ENCODE measurements at regions of chr9 and their contacts with region 1.

Region 1: DNA sequence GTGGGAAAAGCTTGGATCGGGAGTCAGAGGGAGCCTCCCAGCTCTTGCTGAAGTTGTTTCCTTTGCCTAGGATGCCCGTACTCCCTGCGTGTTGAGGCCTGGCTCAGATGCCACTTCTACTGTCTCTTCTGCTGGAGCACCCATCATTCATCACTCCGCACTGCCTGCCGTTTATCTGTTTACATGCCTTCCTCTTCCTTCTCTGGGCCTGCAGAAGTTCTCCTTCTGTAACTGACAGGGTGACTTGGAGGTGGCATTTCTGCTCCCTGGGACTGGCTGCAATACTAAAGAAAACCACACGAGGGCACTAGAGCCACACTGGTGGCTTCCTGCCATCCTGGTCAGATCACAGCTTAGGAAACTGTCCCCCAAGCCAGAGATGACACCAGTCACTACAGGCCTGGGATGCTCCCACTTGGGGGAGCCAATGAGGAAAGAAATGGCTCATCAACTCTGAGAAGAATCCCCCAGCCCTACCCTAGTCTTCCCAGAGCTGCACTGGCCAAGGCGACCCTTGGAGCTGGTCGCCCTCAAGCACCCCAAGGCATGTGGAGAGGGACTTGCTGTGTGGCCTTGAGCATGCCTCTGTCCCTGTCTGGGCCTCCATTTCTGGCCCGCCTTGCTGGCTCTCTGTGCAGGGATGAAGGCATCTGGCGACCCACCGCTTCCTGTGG is 9.7 kb upstream of the SLC25A51 start:
- DNase-seq: peak; percentile 85
- ATAC-seq: peak; percentile 88
- H3K4me3 Mint-ChIP-seq: no peak overlapping the region
- H3K27ac Mint-ChIP-seq: no peak overlapping the region
- H3K4me1 Mint-ChIP-seq: peaks cover 2% of the 10 kb centered on the region
- H3K27me3 Mint-ChIP-seq: no peaks in the 10 kb centered on the region

Region 2: GRCh38 chr9:37806271-37806670 is 107.3 kb before region 1 on chr9:
- CTCF ChIA-PET with region 1: no interaction called
- POLR2A ChIA-PET with region 1: no interaction called
- DNase-seq: no peak
- ATAC-seq: no peak
- H3K4me3 Mint-ChIP-seq: no peak overlapping the region
- H3K27ac Mint-ChIP-seq: no peak overlapping the region
- H3K4me1 Mint-ChIP-seq: peaks cover 18% of the 10 kb centered on the region
- H3K27me3 Mint-ChIP-seq: no peaks in the 10 kb centered on the region

Region 3: GRCh38 chr9:38088006-38088925 is 174.6 kb after region 1 on chr9:
- CTCF ChIA-PET with region 1: interaction called, 55 read pairs
- POLR2A ChIA-PET with region 1: no interaction called
- DNase-seq: peak; percentile 78
- ATAC-seq: peak; percentile 72
- H3K4me3 Mint-ChIP-seq: no peak overlapping the region
- H3K27ac Mint-ChIP-seq: no peak overlapping the region
- H3K4me1 Mint-ChIP-seq: no peaks in the 10 kb centered on the region
- H3K27me3 Mint-ChIP-seq: peaks cover 14% of the 10 kb centered on the region

Region 4: DNA sequence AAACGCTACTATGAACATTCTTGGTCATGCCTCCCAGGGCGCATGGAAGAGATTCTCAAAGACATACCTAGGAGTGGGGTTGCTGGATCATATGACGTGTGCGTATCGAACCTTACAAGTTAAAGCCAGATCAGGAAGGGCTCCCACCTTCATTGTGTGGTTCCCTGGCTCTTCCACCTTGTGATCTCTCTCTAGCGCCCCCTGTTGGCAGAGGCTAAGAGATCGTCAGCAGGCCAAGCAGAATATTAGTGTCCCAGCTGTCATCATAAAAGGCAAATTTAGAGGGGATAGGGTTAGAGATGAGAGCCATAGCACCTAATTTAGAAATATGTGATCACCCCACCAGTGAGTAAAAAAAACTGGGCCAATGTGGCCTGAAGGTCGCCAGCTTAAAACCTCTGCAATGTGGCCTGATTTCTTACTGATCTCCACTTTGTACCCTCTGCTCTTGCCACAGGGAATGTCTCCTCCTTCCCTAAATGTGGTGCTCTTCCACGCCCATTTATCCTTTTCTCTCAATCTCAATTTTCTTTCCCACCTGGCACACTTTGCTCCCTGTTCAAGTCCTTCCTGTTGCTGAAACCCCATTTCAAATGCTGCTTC is 247.1 kb after region 1 on chr9:
- CTCF ChIA-PET with region 1: interaction called, 23 read pairs
- POLR2A ChIA-PET with region 1: no interaction called
- DNase-seq: peak; percentile 76
- ATAC-seq: peak; percentile 51
- H3K4me3 Mint-ChIP-seq: no peak overlapping the region
- H3K27ac Mint-ChIP-seq: no peak overlapping the region
- H3K4me1 Mint-ChIP-seq: peaks cover 5% of the 10 kb centered on the region
- H3K27me3 Mint-ChIP-seq: peaks cover 2% of the 10 kb centered on the region

Region 5: DNA sequence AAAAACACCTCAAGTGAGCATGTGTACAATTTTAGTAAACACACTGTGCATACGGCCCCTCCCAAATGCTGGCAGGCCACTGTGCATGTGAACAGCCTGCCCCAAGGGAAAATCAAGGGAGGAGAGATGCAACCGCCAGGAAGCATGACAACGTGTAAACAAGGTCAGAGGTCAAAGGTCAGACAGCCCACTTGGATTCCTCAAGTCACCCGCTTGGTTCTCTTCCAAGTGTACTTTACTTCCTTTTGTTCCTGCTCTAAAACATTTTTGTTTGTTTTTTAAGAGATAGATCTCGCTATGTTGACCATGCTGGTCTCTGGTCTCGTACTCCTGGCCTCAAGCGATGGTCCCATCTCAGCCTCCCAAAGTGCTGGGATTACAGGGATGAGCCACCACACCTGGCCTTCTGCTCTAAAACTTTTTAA is 282.1 kb after region 1 on chr9:
- CTCF ChIA-PET with region 1: no interaction called
- POLR2A ChIA-PET with region 1: no interaction called
- DNase-seq: no peak
- ATAC-seq: no peak
- H3K4me3 Mint-ChIP-seq: no peak overlapping the region
- H3K27ac Mint-ChIP-seq: no peak overlapping the region
- H3K4me1 Mint-ChIP-seq: no peaks in the 10 kb centered on the region
- H3K27me3 Mint-ChIP-seq: peaks cover 3% of the 10 kb centered on the region

Region 6: GRCh38 chr9:38263532-38263931 is 349.9 kb after region 1 on chr9:
- CTCF ChIA-PET with region 1: interaction called, 10 read pairs
- POLR2A ChIA-PET with region 1: no interaction called
- DNase-seq: no peak
- ATAC-seq: no peak
- H3K4me3 Mint-ChIP-seq: no peak overlapping the region
- H3K27ac Mint-ChIP-seq: no peak overlapping the region
- H3K4me1 Mint-ChIP-seq: no peaks in the 10 kb centered on the region
- H3K27me3 Mint-ChIP-seq: peaks cover 14% of the 10 kb centered on the region

Region 7: DNA sequence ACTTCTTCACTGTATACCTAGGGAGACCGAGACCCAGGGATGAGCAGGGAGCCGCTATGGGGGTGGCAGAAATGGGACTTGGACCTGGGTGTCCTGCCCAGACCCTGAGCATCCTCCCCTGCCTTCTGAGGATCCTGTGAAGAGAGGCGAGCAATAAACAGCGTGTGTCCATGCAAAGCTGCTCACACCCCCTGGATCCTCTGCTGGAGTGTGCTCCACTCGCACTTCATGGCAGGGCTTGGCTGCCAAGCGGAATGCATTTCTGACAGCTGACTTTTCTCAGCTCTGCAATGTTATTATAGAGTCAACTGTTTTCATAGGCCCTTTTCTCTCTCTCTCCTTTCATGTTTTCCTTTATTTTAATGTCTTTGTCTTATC is 447.8 kb after region 1 on chr9:
- CTCF ChIA-PET with region 1: interaction called, 10 read pairs
- POLR2A ChIA-PET with region 1: no interaction called
- DNase-seq: no peak
- ATAC-seq: no peak
- H3K4me3 Mint-ChIP-seq: no peak overlapping the region
- H3K27ac Mint-ChIP-seq: no peak overlapping the region
- H3K4me1 Mint-ChIP-seq: peaks cover 4% of the 10 kb centered on the region
- H3K27me3 Mint-ChIP-seq: peaks cover 7% of the 10 kb centered on the region

Region 8: GRCh38 chr9:38432922-38433510 is 519.4 kb after region 1 on chr9:
- CTCF ChIA-PET with region 1: interaction called, 16 read pairs
- POLR2A ChIA-PET with region 1: no interaction called
- DNase-seq: no peak
- ATAC-seq: no peak
- H3K4me3 Mint-ChIP-seq: no peak overlapping the region
- H3K27ac Mint-ChIP-seq: no peak overlapping the region
- H3K4me1 Mint-ChIP-seq: peaks cover 9% of the 10 kb centered on the region
- H3K27me3 Mint-ChIP-seq: peaks cover 13% of the 10 kb centered on the region